ENCODE measurements at regions of chr14 and their contacts with region 1.

Region 1: GRCh38 chr14:76720382-76720813 is 40.9 kb upstream of the VASH1 start:
- DNase-seq: peak; percentile 46 to 67
- ATAC-seq: peak; percentile 62 to 65
- H3K4me3 ChIP-seq: no peak overlapping the region
- H3K27ac ChIP-seq: peak overlapping the region; percentile 64 to 75 (median 69)
- H3K4me1 ChIP-seq: peaks cover 17 to 23% of the 10 kb centered on the region in 2 donors
- H3K27me3 ChIP-seq: no peaks in the 10 kb centered on the region
- CTCF ChIP-seq: no peak
- POLR2A ChIP-seq: no peak

Region 2: DNA sequence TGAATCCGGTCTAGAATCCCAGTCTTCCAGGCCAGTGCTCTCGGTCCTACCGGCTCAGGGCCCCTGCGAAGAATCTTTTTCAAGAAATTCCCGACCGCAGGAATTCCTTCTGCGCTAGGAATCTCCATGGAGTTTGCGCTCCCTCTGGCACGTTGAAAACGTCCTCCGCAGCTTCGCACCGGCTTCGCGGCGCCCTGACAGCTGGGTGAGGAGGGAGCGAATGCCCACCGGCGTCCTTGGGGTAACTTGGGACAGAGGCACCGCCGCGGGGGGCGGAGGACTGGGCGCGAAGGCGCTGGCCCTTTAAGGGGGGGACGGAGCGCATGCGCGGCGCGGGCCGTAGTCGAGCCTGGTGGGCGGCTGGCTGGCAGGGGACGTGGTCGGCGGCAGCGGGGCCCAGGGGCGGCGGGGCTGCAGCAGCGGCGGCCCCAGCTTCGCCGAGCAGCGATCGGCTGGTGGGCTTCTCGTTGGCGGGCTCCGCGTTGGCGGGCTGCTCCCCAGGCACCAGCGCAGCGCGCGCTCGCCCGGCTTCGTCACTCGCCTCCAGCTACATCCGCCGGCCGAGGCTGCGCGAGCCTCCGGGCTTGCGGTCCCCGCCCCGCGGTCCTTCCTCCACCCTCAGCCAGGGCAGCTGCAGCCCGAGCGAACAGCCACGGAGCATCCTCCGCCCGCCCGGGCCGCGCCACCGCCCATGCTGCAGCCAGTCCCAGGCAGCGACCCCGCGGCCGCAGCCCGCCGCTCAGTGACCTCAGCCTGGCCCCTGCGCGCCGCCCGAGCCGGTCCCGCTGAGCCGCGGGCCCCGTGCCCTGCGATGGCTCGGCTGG is 41.0 kb after region 1 on chr14 and contains the start of gene VASH1:
- in situ Hi-C with region 1: no loop called
- intact Hi-C with region 1: loop called (anchors 5 kb)
- DNase-seq: no peak
- ATAC-seq: peak; percentile 59 to 64
- H3K4me3 ChIP-seq: peak within 1 kb of the TSS; percentile 66 to 80 (median 76)
- H3K27ac ChIP-seq: peak within 1 kb of the TSS; percentile 4 to 73 (median 66)
- H3K4me1 ChIP-seq: peaks cover 10 to 18% of the 10 kb centered on the region in 2 donors
- H3K27me3 ChIP-seq: peaks cover 10 to 14% (median 10%) of the 10 kb centered on the region in 3 donors
- CTCF ChIP-seq: no peak
- POLR2A ChIP-seq: no peak
- total RNA-seq, gene VASH1: 0.56 to 6.1 (median 1.2) TPM

Region 3: DNA sequence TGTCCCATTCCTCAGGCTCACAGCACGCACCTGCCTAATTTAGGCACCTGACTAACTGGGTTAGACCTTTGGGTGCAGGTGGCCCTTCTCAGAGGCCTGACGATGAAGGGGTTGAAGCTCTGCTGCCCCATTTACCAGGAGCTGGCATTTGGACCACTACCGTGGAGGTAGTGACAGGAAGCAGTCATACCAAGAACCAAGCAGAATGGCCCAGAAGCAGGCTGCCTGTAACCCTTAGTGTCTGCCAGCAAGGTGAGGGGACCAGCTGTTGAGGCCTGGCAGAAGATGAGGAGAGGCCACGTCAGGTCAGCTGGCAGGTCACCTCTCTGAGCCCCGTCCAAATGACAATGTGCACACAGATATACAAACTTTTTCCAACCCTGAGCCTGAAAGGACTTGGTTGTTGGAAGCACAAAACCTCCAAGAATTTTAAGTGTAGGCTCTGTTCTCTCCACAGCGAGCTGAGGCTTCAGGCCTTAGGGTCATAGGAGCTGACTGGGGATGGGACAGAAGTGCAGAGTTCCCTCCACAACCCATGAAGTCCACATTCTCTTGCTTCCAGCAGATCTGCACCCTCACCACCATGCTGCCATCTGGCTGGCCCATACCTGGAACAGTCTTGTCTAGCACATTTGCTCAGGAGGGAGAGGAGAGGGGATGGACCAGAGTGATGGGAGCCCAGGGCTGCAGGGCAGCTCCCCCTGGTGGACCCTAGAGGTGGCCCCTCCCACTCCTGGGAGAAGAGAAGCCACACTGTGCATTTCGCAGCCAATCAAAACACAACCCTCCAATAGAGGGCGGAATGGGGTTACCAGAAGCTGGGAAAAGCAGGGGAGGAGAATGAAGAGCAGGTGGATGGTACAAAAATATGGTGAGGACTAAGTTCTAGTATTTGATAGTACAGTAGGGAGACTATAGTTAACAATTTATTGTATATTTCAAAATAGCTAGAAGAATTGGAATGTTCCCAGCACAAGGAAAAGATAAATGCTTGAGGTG is 64.2 kb after region 1 on chr14:
- in situ Hi-C with region 1: loop called in 2 of 4 experiments (anchors 10 kb)
- intact Hi-C with region 1: loop called (anchors 2 kb)
- DNase-seq: peak; percentile 49 to 62
- ATAC-seq: peak; percentile 82 to 88
- H3K4me3 ChIP-seq: no peak overlapping the region
- H3K27ac ChIP-seq: peak overlapping the region in 2 of 4 donors; percentile 1 to 29
- H3K4me1 ChIP-seq: peaks cover 6 to 15% of the 10 kb centered on the region in 2 donors
- H3K27me3 ChIP-seq: no peaks in the 10 kb centered on the region
- CTCF ChIP-seq: peak; percentile 55 to 84 (median 76)
- POLR2A ChIP-seq: no peak

Region 4: GRCh38 chr14:77200406-77200985 is 480.1 kb after region 1 on chr14:
- in situ Hi-C with region 1: no loop called
- intact Hi-C with region 1: no loop called
- DNase-seq: no peak
- ATAC-seq: no peak
- H3K4me3 ChIP-seq: no peak overlapping the region
- H3K27ac ChIP-seq: no peak overlapping the region
- H3K4me1 ChIP-seq: no peaks in the 10 kb centered on the region
- H3K27me3 ChIP-seq: no peaks in the 10 kb centered on the region
- CTCF ChIP-seq: no peak
- POLR2A ChIP-seq: no peak